HEK293 (cell line): ENCODE measurements at regions of chr1 and their contacts with region 1.

Region 1: GRCh38 chr1:154193821-154194220 is 1.9 kb upstream of the TPM3 start:
- H3K4me3 ChIP-seq: no peak overlapping the region
- H3K27ac ChIP-seq: no peak overlapping the region
- H3K4me1 ChIP-seq: peaks cover 6% of the 10 kb centered on the region
- CTCF ChIP-seq: no peak

Region 2: GRCh38 chr1:154272217-154272998 is 78.6 kb after region 1 on chr1 and contains the start of gene HAX1:
- CTCF ChIA-PET with region 1: interaction called, 12 read pairs
- POLR2A ChIA-PET with region 1: interaction called, 3 read pairs
- H3K4me3 ChIP-seq: peak within 1 kb of the TSS; percentile 80
- H3K27ac ChIP-seq: peak within 1 kb of the TSS; percentile 62; the same call in 1 of the 2 replicates
- H3K4me1 ChIP-seq: no peaks in the 10 kb centered on the region
- CTCF ChIP-seq: peak; percentile 93